Caco-2 (cell line): ENCODE measurements at regions of chr11 and their contacts with region 1.

Region 1: GRCh38 chr11:108593214-108593922 is at the start of gene EXPH5:
- DNase-seq: peak; percentile 100
- H3K4me3 ChIP-seq: peak within 1 kb of the TSS; percentile 89
- H3K4me3 Mint-ChIP-seq: peak within 1 kb of the TSS; percentile 100
- H3K27ac Mint-ChIP-seq: peak within 1 kb of the TSS; percentile 100
- H3K4me1 ChIP-seq: peaks cover 18% of the 10 kb centered on the region
- H3K4me1 Mint-ChIP-seq: peaks cover 33% of the 10 kb centered on the region
- H3K27me3 ChIP-seq: no peaks in the 10 kb centered on the region; the same call in 1 of the 2 replicates
- H3K27me3 Mint-ChIP-seq: no peaks in the 10 kb centered on the region
- CTCF ChIP-seq: no peak
- total RNA-seq, gene EXPH5: 15.3 and 18.1 TPM in 2 replicates

Region 2: DNA sequence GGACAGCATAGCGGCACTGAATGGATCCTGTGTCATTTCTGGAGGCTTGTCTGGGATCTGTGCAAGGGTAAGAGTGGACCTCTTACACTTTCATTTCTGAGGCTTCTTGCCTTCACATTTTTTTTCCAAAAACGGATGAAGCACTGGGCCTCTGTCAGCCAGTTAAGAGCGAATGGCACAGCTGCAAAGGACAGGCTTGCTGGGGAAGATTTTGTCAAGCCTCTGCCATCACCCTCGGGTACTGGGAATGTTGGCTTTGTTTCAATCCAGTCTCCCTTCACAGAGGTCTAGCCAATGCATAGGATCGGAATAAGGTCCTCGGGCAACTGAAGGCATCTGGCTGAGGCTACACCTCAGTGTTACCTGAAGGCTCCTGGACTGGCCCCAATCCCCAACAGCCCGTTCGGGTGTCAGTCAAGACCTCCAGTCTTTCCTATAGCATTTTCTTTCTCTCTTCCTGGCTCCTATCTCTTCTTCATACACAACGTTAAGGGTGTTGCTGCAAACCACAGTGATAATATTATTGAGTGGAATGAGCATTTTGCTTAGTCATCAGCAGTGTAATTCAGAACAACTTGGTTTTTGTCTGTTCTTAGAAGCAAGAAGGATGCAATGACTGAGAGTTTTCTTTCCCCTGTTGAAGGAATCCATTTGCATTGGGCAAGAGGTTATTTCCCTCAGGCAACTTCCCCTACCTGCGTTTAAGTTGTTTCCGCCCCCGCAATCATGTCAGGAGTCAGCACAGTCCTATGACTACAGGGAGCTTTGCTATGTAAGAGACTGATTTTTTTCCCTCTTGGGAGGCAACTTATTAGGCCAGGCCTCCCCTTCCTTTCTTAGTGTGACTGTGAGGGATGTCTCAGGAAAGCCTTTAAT is 393.7 kb before region 1 on chr11:
- CTCF ChIA-PET with region 1: no interaction called
- POLR2A ChIA-PET with region 1: no interaction called
- intact Hi-C with region 1: no loop called
- DNase-seq: no peak
- H3K4me3 ChIP-seq: no peak overlapping the region
- H3K4me3 Mint-ChIP-seq: no peak overlapping the region
- H3K27ac Mint-ChIP-seq: peak overlapping the region; percentile 31
- H3K4me1 ChIP-seq: no peaks in the 10 kb centered on the region
- H3K4me1 Mint-ChIP-seq: no peaks in the 10 kb centered on the region
- H3K27me3 ChIP-seq: no peaks in the 10 kb centered on the region
- H3K27me3 Mint-ChIP-seq: no peaks in the 10 kb centered on the region
- CTCF ChIP-seq: no peak

Region 3: DNA sequence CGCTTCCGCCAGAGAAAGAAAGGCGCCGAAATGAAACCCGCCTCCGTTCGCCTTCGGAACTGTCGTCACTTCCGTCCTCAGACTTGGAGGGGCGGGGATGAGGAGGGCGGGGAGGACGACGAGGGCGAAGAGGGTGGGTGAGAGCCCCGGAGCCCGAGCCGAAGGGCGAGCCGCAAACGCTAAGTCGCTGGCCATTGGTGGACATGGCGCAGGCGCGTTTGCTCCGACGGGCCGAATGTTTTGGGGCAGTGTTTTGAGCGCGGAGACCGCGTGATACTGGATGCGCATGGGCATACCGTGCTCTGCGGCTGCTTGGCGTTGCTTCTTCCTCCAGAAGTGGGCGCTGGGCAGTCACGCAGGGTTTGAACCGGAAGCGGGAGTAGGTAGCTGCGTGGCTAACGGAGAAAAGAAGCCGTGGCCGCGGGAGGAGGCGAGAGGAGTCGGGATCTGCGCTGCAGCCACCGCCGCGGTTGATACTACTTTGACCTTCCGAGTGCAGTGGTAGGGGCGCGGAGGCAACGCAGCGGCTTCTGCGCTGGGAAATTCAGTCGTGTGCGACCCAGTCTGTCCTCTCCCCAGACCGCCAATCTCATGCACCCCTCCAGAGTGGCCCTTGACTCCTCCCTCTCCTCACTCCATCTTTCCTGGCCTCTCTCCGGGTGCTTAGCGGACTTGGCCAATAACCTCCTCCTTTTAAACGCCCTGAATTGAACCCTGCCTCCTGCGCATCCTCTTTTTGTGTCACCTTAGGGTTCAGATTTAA is 370.5 kb before region 1 on chr11 and contains the start of gene ATM:
- CTCF ChIA-PET with region 1: interaction called, 3 read pairs
- POLR2A ChIA-PET with region 1: interaction called, 4 read pairs
- intact Hi-C with region 1: loop called (anchors 1 kb)
- DNase-seq: peak; percentile 100
- H3K4me3 ChIP-seq: peak within 1 kb of the TSS; percentile 62
- H3K4me3 Mint-ChIP-seq: no peak within 1 kb of the TSS
- H3K27ac Mint-ChIP-seq: no peak within 1 kb of the TSS
- H3K4me1 ChIP-seq: peaks cover 19% of the 10 kb centered on the region
- H3K4me1 Mint-ChIP-seq: peaks cover 21% of the 10 kb centered on the region
- H3K27me3 ChIP-seq: no peaks in the 10 kb centered on the region
- H3K27me3 Mint-ChIP-seq: no peaks in the 10 kb centered on the region
- CTCF ChIP-seq: peak; percentile 86 to 98
- total RNA-seq, gene ATM: 77.1 and 77.9 TPM in 2 replicates

Region 4: DNA sequence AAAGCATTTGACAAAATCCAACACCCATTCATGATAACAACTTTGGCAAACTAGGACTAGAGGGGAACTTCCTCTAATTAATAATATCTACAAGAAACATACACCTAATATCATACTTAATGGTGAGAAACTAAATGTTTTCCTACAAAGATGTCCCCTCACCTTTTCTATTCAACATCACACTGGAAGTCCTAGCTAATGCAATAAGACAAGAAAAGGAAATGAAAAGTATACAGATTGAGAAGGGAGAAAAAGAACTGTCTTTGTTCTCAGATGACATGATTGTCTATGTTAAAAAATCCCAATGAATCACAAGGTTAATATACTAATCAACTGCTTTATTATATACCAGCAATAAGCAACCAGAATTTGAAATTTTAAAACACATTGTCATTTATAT is 178.4 kb before region 1 on chr11:
- CTCF ChIA-PET with region 1: no interaction called
- POLR2A ChIA-PET with region 1: no interaction called
- intact Hi-C with region 1: loop called (anchors 1 kb)
- DNase-seq: no peak
- H3K4me3 ChIP-seq: no peak overlapping the region
- H3K4me3 Mint-ChIP-seq: no peak overlapping the region
- H3K27ac Mint-ChIP-seq: no peak overlapping the region
- H3K4me1 ChIP-seq: no peaks in the 10 kb centered on the region
- H3K4me1 Mint-ChIP-seq: no peaks in the 10 kb centered on the region
- H3K27me3 ChIP-seq: no peaks in the 10 kb centered on the region
- H3K27me3 Mint-ChIP-seq: peaks cover 3% of the 10 kb centered on the region
- CTCF ChIP-seq: no peak

Region 5: DNA sequence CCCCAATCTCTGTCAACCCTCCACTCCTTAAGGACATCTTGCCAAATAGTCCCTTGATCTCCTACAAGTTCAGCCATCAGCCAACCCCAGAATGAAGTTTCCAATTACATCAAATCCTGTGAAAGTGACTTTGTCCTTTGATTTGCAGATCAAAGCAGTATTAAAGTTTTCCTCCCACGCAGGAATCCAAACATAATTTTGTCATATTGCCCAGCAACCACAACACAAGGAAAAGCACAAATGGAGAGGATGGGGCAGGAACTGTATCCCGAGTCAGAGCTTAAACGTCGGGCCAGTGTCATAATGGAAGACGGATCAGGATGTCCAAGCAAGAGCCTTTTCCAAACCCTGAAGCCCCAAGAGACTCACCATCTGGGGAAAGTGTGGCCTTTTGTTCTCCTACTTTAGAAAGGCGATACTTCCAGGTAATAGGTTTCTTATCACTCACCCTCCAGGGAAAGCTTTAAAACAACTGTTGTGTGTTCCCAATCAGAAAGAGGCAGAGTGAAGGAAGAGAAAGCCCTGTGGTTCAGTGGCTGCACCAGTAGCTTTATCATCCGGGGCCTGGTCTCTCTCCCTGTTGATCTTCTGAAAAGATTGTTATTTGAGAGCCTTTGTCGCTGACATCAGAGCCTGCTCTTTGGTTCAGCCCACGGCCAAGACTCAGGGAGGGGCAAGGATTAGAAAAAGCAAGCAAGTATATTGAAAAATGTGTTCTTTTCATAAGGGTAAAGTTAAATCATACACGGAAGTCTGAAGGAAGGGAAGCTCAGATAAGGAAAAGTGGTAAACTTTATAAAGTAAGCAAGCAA is 41.5 kb before region 1 on chr11:
- CTCF ChIA-PET with region 1: interaction called, 5 read pairs
- POLR2A ChIA-PET with region 1: interaction called, 5 read pairs
- intact Hi-C with region 1: loop called (anchors 1 kb)
- DNase-seq: peak in 1 of 2 experiments; percentile 39
- H3K4me3 ChIP-seq: no peak overlapping the region
- H3K4me3 Mint-ChIP-seq: peak overlapping the region; percentile 38
- H3K27ac Mint-ChIP-seq: peak overlapping the region; percentile 40
- H3K4me1 ChIP-seq: peaks cover 51% of the 10 kb centered on the region
- H3K4me1 Mint-ChIP-seq: peaks cover 35% of the 10 kb centered on the region
- H3K27me3 ChIP-seq: no peaks in the 10 kb centered on the region
- H3K27me3 Mint-ChIP-seq: no peaks in the 10 kb centered on the region
- CTCF ChIP-seq: no peak

Region 6: DNA sequence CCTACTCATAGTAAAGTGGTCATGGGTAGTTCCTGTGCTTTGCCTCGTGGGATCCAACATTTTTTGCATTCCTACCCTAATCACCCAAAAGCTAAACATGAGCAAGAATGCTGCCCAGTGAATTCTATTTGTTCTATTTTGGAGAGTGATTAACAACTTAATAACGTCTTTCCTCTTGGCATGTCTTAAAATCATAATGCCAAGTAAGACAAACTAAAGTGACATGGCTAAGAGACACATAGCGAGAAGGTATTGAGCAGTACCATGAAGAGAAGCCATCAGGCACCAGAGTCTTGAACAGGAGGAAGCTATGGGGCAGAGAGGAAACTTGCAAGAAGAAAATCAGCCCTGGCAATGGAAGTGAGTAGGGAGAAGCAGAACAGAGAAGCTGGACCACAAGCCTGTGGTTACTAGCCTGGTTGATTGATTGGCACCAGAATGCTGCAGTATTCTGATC is 31.8 kb before region 1 on chr11:
- CTCF ChIA-PET with region 1: no interaction called
- POLR2A ChIA-PET with region 1: interaction called, 15 read pairs
- intact Hi-C with region 1: loop called (anchors 1 kb)
- DNase-seq: peak in 1 of 2 experiments; percentile 44
- H3K4me3 ChIP-seq: no peak overlapping the region
- H3K4me3 Mint-ChIP-seq: no peak overlapping the region
- H3K27ac Mint-ChIP-seq: peak overlapping the region; percentile 58
- H3K4me1 ChIP-seq: peaks cover 27% of the 10 kb centered on the region
- H3K4me1 Mint-ChIP-seq: peaks cover 48% of the 10 kb centered on the region
- H3K27me3 ChIP-seq: no peaks in the 10 kb centered on the region
- H3K27me3 Mint-ChIP-seq: no peaks in the 10 kb centered on the region
- CTCF ChIP-seq: no peak

Region 7: DNA sequence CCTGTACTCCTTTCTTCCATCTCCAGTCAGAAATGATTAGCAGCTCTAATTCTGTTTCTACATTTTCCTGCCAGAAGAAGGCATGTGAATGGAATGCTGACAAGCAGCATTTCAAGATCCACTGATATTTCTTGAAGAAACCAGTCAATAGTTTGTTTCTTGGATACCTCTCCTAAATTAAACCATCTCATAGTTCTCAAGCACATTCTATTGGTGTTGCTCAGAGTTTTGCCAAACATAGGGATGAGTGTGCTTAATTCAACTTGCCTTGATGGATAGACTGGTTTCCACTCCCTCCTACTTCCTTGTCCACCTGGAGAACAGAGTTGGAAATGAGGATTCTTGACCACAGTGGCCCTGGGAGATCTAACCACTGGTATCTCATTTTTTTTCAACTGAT is 41.7 kb after region 1 on chr11:
- CTCF ChIA-PET with region 1: no interaction called
- POLR2A ChIA-PET with region 1: no interaction called
- intact Hi-C with region 1: loop called (anchors 1 kb)
- DNase-seq: peak in 1 of 2 experiments; percentile 32
- H3K4me3 ChIP-seq: no peak overlapping the region
- H3K4me3 Mint-ChIP-seq: no peak overlapping the region
- H3K27ac Mint-ChIP-seq: peak overlapping the region; percentile 1
- H3K4me1 ChIP-seq: peaks cover 31% of the 10 kb centered on the region
- H3K4me1 Mint-ChIP-seq: peaks cover 33% of the 10 kb centered on the region
- H3K27me3 ChIP-seq: no peaks in the 10 kb centered on the region
- H3K27me3 Mint-ChIP-seq: no peaks in the 10 kb centered on the region
- CTCF ChIP-seq: no peak

Region 8: GRCh38 chr11:108664730-108665525 is 71.6 kb after region 1 on chr11 and contains the start of gene DDX10:
- CTCF ChIA-PET with region 1: interaction called, 3 read pairs
- POLR2A ChIA-PET with region 1: interaction called, 5 read pairs
- intact Hi-C with region 1: loop called (anchors 1 kb)
- DNase-seq: peak; percentile 100
- H3K4me3 ChIP-seq: peak within 1 kb of the TSS; percentile 84
- H3K4me3 Mint-ChIP-seq: peak within 1 kb of the TSS; percentile 95
- H3K27ac Mint-ChIP-seq: peak within 1 kb of the TSS; percentile 98
- H3K4me1 ChIP-seq: peaks cover 24% of the 10 kb centered on the region
- H3K4me1 Mint-ChIP-seq: peaks cover 42% of the 10 kb centered on the region
- H3K27me3 ChIP-seq: no peaks in the 10 kb centered on the region
- H3K27me3 Mint-ChIP-seq: no peaks in the 10 kb centered on the region
- CTCF ChIP-seq: no peak
- total RNA-seq, gene DDX10: 72.5 and 78.3 TPM in 2 replicates